ENCODE measurements at regions of chr4 and their contacts with region 1.

Region 1: GRCh38 chr4:88706574-88706973 is 8.9 kb upstream of the NAP1L5 start:
- DNase-seq: no peak
- H3K4me3 ChIP-seq: no peak overlapping the region
- H3K27ac ChIP-seq: no peak overlapping the region
- H3K4me1 ChIP-seq: no peaks in the 10 kb centered on the region; a peak in 1 of 7 replicates
- H3K27me3 ChIP-seq: no peaks in the 10 kb centered on the region
- CTCF ChIP-seq: peak in 2 of 3 experiments; percentile 56 to 64; a peak in 3 of 4 replicates
- EP300 ChIP-seq: no peak
- POLR2A ChIP-seq: no peak
- RAD21 ChIP-seq: peak; percentile 85 to 87

Region 2: DNA sequence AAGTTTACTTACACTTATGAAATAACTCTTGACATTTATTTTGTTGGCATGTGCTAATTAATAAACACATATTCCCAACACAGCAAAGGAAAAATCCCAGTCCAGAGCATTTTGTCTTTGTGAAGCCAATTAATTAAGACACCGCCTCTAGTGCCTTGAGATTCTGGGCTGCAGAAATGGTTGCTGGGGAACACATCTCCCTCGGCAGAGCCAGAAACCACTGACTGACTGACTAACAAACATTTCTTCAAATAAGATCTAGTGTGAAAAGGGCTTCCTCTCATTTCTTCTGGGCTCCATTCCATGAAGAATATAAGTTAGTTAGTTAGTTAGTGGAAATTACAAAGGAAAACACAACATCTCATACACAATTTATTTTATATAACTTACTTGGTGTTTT is 19.4 kb after region 1 on chr4:
- CTCF ChIA-PET with region 1: interaction called, 13 read pairs
- POLR2A ChIA-PET with region 1: no interaction called
- DNase-seq: no peak
- H3K4me3 ChIP-seq: no peak overlapping the region
- H3K27ac ChIP-seq: no peak overlapping the region
- H3K4me1 ChIP-seq: peaks cover 0 to 4% (median 1%) of the 10 kb centered on the region in 4 experiments; a peak in 2 of 7 replicates
- H3K27me3 ChIP-seq: no peaks in the 10 kb centered on the region
- CTCF ChIP-seq: no peak
- EP300 ChIP-seq: no peak
- POLR2A ChIP-seq: no peak
- RAD21 ChIP-seq: no peak

Region 3: DNA sequence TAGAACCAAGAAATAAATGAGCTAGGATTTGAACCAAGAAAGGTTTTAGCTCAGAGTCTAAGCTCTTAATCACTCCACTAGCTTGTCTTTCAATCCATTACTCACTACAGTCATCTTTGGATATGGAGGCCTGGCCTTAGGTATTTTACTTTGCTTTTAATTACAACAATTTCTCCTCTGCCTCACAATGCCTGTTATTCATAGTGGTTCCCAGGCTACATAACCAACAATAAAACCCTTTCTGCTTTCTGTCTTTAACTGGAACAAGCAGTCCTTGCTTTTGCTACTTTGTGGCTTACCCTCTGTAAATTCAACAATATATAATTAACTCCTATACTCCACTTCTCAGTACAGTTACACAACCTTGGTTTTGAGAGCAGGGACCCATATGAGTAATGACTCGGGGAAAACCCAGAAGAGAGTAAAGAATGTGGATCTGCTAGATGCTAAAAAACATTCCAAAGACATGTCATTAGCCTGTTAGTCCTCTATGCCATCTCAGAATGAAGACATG is 85.8 kb after region 1 on chr4:
- CTCF ChIA-PET with region 1: interaction called, 32 read pairs
- POLR2A ChIA-PET with region 1: no interaction called
- DNase-seq: no peak
- H3K4me3 ChIP-seq: no peak overlapping the region
- H3K27ac ChIP-seq: no peak overlapping the region
- H3K4me1 ChIP-seq: peaks cover 0 to 8% (median 0%) of the 10 kb centered on the region in 4 experiments; a peak in 2 of 7 replicates
- H3K27me3 ChIP-seq: no peaks in the 10 kb centered on the region
- CTCF ChIP-seq: no peak
- EP300 ChIP-seq: no peak
- POLR2A ChIP-seq: no peak
- RAD21 ChIP-seq: no peak

Region 4: GRCh38 chr4:89024051-89024675 is 317.6 kb after region 1 on chr4:
- CTCF ChIA-PET with region 1: interaction called, 23 read pairs
- POLR2A ChIA-PET with region 1: no interaction called
- DNase-seq: no peak
- H3K4me3 ChIP-seq: no peak overlapping the region
- H3K27ac ChIP-seq: no peak overlapping the region
- H3K4me1 ChIP-seq: no peaks in the 10 kb centered on the region
- H3K27me3 ChIP-seq: no peaks in the 10 kb centered on the region
- CTCF ChIP-seq: peak in 2 of 3 experiments; percentile 71 to 74; a peak in 3 of 4 replicates
- EP300 ChIP-seq: no peak
- POLR2A ChIP-seq: no peak
- RAD21 ChIP-seq: peak; percentile 95

Measured in H1 (cell line).